IMR-90 (cell line): ENCODE measurements at regions of chr5 and their contacts with region 1.

Region 1: GRCh38 chr5:67702008-67702407 is 505.4 kb upstream of the CD180 start:
- DNase-seq: no peak
- ATAC-seq: no peak
- H3K4me3 ChIP-seq: no peak overlapping the region
- H3K27ac ChIP-seq: no peak overlapping the region
- H3K4me1 ChIP-seq: no peaks in the 10 kb centered on the region
- H3K27me3 ChIP-seq: no peaks in the 10 kb centered on the region
- CTCF ChIP-seq: no peak
- POLR2A ChIP-seq: no peak
- RAD21 ChIP-seq: no peak

Region 2: GRCh38 chr5:67552773-67553172 is 149.2 kb before region 1 on chr5:
- CTCF ChIA-PET with region 1: no interaction called
- POLR2A ChIA-PET with region 1: no interaction called
- dilution Hi-C with region 1: no loop called
- in situ Hi-C with region 1: no loop called
- intact Hi-C with region 1: loop called (anchors 5 kb)
- DNase-seq: no peak
- ATAC-seq: no peak
- H3K4me3 ChIP-seq: no peak overlapping the region
- H3K27ac ChIP-seq: no peak overlapping the region
- H3K4me1 ChIP-seq: no peaks in the 10 kb centered on the region
- H3K27me3 ChIP-seq: no peaks in the 10 kb centered on the region
- CTCF ChIP-seq: no peak
- POLR2A ChIP-seq: no peak
- RAD21 ChIP-seq: no peak